ENCODE measurements at regions of chr1 and their contacts with region 1.

Region 1: GRCh38 chr1:201511941-201512539 is 5.1 kb upstream of the CSRP1 start:
- DNase-seq: no peak

Region 2: DNA sequence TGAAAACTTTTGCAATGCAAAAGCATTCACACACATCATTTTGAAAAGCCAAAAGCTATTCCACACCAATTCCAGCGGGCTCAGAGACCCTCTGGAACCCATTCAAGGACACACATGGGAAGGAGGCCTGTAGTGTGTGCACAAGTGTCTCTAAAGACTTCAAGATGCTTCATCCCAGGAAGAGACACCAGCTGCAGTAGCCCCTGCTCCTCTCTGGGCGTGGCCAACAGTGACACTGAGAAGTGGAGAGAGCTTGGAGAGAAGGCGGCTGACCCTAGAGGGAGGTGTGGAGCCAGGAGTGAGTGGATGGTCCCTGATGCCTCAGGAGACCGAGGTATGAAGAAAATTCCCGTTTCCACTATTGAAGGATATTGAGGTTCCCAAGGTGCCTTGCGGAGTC is 75.6 kb before region 1 on chr1:
- CTCF ChIA-PET with region 1: interaction called, 11 read pairs
- POLR2A ChIA-PET with region 1: no interaction called
- DNase-seq: peak; percentile 63

Region 3: GRCh38 chr1:201447911-201448871 is 63.8 kb before region 1 on chr1:
- CTCF ChIA-PET with region 1: interaction called, 19 read pairs
- POLR2A ChIA-PET with region 1: interaction called, 4 read pairs
- DNase-seq: peak; percentile 85

Region 4: DNA sequence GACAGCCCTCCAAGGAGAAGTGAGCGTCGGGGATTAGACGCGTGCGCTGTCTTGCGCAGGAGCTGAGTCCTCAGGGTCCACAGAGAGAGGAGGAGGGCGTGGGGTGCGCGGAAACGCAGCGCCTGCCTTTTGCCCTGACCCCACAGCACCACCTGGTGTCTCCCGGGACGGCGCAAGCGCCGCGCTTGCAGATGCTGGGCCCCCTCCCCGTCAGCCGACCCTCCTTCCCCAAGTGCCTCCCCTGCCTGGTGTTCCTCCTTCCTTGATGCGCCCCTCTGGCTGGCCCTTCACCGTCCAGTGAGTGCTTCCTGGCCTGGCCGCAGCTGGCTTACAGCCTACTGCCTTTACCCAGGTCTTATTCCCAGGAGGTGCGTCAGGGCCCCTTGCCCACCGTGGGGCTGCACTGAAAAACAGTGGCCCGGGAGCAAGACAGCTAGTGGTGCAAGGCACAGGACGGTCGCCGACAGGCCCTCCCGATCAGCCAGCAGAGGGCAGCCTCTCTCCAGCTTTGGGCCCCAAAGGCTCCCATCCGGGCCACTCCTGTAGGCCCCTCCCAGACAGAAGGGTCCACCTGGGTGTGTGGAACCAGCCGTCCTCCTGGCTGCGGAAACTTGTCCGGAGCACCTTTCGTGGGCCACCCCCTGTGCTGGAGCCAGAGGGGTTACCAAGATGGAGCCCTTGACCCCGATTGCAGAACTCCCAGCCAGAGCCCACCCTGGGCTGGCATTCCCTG is 30.1 kb before region 1 on chr1:
- CTCF ChIA-PET with region 1: interaction called, 135 read pairs
- POLR2A ChIA-PET with region 1: interaction called, 10 read pairs
- DNase-seq: peak; percentile 95

Region 5: DNA sequence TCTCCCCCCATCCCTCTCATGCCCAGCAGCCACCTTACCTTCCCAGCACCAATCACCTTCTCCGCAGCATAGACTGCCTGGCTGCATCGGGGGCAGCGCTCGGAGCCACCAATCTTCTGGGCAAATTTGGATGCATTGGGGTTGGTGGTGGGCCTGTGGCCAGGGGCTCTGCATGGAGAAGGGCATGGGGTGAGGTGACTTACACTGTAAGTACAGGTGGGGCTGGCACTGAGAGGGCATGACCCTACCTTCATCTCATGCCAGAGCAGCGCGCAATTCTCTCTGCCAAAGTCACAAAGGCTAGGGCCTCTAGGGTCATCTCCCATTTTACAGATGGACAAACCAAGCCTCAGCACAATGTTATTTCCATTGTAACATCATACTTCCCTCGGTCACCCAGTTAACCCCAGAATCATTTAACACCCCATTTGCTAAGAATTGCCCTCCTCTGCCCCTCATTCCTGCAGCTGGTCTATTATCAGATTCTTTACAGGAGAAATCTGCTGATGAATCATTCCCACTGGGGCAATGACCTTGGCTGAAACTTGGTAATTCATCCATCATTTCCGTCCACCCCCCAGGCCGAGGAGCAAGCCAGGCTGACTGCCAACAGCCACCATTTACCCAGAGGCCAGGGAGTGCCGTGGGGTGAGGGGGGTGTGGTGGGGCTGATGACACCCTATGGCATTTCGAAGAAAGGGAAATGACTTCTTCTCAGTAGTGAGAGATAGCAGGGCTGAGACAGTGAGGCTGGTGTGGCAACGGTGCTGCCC is 23.0 kb before region 1 on chr1:
- CTCF ChIA-PET with region 1: interaction called, 18 read pairs
- POLR2A ChIA-PET with region 1: interaction called, 3 read pairs
- DNase-seq: no peak

Region 6: DNA sequence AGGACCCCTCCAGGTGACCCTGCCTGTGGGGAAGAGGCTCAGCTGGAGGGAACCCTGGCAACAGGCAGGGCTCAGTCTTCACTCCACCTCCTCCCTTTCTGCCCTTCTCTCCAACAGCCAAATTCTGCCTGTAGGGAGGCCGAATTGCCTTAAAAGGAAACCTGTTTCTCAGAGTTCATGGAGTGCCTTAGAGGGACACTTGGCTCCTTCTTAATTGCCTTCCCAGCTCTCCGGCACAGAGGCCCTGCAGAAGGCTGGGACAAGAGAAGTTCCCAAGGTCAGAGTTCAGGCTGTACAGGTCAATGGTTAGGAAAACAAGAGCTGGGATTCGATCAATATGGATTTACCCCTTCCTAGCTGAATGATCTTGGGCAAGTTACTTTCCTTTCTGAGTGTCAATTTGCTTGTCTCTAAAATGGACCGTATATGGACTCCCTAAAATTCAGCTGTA is 11.3 kb before region 1 on chr1:
- CTCF ChIA-PET with region 1: interaction called, 58 read pairs
- POLR2A ChIA-PET with region 1: interaction called, 11 read pairs
- DNase-seq: no peak

Region 7: DNA sequence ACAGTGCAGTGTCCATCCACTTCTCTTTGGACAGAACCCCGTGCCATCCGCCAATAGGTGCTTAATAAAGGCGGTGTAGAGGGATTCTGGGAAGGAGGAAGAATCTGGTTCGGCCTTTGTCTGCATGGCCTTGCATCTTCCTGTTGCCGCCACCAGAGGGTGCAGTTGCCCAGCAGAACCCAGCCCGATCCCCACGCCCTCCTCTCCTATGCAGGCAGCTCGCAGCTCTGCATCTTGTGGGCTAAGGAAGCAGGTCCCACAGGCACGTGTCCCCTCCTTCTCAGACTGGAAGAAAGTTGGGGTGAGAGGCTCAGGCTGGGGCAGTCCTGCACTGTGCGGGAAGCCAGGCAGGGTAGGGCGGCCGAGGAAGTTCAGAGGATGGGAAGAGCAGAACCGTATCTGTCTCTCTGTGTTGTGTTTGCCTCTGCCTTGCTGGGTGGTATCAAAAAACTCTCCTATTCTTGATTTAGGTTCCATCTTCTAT is 47.7 kb after region 1 on chr1:
- CTCF ChIA-PET with region 1: no interaction called
- POLR2A ChIA-PET with region 1: no interaction called
- DNase-seq: peak; percentile 93

Region 8: DNA sequence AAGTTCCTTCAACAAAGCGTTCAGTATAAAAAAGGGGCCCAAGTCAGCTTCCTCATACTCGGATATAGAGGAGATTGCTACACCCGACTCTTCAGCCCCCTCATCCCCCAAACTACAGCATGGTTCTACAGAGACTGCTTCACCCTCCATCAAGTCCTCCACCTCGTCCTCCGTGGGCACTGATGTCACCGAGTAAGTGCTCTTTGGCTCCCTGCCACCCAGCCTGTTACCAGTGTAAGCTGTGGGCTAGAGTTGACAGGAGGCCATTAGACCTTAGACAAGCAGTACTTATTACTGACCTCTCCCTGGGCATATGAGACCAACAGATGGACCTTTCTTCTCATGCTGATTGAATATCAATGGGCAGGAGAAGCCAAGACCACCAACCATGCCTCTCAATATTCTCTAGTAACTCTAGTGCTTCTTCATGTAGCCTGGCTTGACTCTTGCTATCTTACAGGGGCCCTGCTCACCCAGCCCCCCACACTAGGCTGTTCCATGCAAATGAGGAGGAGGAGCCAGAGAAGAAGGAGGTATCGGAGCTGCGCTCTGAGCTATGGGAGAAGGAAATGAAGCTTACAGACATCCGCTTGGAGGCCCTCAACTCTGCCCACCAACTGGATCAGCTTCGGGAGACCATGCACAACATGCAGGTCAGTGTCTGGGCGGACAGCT is 296.1 kb after region 1 on chr1:
- CTCF ChIA-PET with region 1: no interaction called
- POLR2A ChIA-PET with region 1: no interaction called
- DNase-seq: no peak

Measured in HEK293T (cell line).